ENCODE measurements at regions of chr20 and their contacts with region 1.

Region 1: GRCh38 chr20:45229264-45230056 is 8.3 kb downstream of the SEMG2 start:
- DNase-seq: no peak
- ATAC-seq: no peak
- H3K4me3 ChIP-seq: no peak overlapping the region
- H3K27ac ChIP-seq: no peak overlapping the region
- H3K4me1 ChIP-seq: no peaks in the 10 kb centered on the region
- H3K27me3 ChIP-seq: peaks cover 4% of the 10 kb centered on the region
- CTCF ChIP-seq: peak; percentile 40
- POLR2A ChIP-seq: no peak
- RAD21 ChIP-seq: peak; percentile 34

Region 2: DNA sequence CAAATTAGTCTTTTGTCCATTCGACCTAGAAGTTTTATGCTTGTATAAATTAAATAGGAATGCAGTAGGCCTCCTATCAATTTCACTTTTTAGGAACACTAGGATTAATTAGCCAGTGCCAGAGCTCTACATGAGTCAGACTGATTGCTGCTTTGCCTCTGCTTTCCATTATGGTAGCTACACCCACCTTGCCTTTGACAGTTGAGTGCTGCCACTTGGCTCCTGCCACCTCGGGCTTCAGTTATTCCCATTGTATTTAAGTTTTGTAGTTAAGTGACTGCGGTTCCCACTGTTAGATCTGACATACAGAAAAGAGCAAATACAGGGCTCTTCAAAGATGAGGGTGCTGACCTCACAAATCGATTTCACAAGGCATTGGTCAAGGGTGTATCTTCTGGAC is 88.6 kb before region 1 on chr20:
- CTCF ChIA-PET with region 1: no interaction called
- POLR2A ChIA-PET with region 1: no interaction called
- dilution Hi-C with region 1: no loop called
- in situ Hi-C with region 1: no loop called
- intact Hi-C with region 1: no loop called
- DNase-seq: no peak
- ATAC-seq: no peak
- H3K4me3 ChIP-seq: no peak overlapping the region
- H3K27ac ChIP-seq: no peak overlapping the region
- H3K4me1 ChIP-seq: no peaks in the 10 kb centered on the region
- H3K27me3 ChIP-seq: peaks cover 5% of the 10 kb centered on the region
- CTCF ChIP-seq: no peak
- POLR2A ChIP-seq: no peak
- RAD21 ChIP-seq: no peak

Region 3: GRCh38 chr20:45269754-45270270 is 40.4 kb after region 1 on chr20:
- CTCF ChIA-PET with region 1: no interaction called
- POLR2A ChIA-PET with region 1: no interaction called
- dilution Hi-C with region 1: no loop called
- in situ Hi-C with region 1: no loop called
- intact Hi-C with region 1: loop called (anchors 1 kb)
- DNase-seq: no peak
- ATAC-seq: no peak
- H3K4me3 ChIP-seq: no peak overlapping the region
- H3K27ac ChIP-seq: no peak overlapping the region
- H3K4me1 ChIP-seq: no peaks in the 10 kb centered on the region
- H3K27me3 ChIP-seq: peaks cover 3% of the 10 kb centered on the region
- CTCF ChIP-seq: no peak
- POLR2A ChIP-seq: no peak
- RAD21 ChIP-seq: no peak

Region 4: DNA sequence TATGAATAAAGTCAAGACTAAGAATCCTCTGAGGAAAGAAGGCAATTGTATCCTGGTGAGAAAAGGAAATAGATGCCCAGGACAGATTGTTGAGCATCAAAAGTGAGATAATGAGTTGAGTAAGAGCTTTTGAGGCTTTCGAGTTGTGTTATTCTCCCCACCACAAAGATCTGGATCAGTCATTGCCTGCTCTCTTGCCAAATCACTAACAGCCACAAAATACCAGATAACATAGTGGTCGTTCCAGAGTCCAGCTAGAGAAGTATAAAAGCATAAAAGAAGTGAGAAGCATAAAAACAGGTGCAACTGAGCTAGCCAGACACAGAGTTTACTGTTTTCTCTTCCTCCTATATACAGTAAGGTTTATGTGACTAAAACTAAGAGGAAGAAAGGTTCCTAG is 497.6 kb after region 1 on chr20:
- CTCF ChIA-PET with region 1: no interaction called
- POLR2A ChIA-PET with region 1: no interaction called
- dilution Hi-C with region 1: no loop called
- in situ Hi-C with region 1: no loop called
- intact Hi-C with region 1: loop called (anchors 10 kb)
- DNase-seq: no peak
- ATAC-seq: no peak
- H3K4me3 ChIP-seq: no peak overlapping the region
- H3K27ac ChIP-seq: no peak overlapping the region
- H3K4me1 ChIP-seq: no peaks in the 10 kb centered on the region
- H3K27me3 ChIP-seq: no peaks in the 10 kb centered on the region; the same call in 1 of the 2 replicates
- CTCF ChIP-seq: no peak
- POLR2A ChIP-seq: no peak
- RAD21 ChIP-seq: no peak

Measured in IMR-90 (cell line).